ENCODE measurements at regions of chr21 and their contacts with region 1.

Region 1: DNA sequence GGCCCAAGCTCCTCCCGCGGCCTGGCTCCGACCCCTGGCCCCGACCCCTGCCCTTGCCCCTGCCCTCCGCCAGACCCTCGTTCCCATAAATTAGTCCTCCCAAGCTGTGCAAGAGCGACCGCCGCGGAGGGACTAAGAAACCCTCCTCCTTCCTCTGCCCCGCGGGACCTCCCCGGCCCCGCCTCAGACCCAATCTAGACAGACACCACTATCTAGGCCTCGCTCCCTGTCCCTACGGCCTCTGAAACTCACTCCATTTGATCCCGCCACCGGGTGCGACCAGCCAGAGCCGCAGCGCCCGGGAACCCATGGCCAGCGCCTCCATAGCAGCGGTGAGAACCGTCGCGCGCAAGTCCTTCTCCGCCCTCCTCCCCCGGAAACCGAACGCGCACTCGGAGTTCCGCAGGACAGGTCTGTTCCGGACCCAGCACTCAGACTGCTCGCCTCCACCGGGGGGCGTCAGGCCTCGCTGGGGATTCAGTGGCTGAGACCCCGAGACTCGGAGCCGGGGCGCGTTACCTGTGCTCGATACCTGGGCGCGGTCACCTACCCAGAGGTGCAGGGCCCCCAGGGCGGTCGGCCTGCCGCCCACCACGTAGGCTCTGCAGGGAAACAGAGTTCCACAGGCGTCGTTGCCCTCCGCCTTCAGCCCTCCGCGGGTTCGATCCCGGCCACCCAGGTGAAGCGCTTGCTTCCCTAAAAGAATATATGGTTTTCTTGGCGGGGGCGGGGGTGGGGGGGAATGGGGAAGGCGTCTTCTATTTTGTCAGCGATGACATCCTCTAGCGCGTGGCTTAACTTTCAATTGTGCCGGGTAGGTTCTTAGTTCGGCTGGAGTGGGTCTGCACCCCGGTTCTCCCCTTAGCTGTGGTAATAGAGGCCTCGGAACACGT is at the start of gene MRPL39:
- DNase-seq: peak; percentile 92
- H3K4me3 ChIP-seq: peak within 1 kb of the TSS; percentile 62 to 80 (median 68)
- H3K27ac ChIP-seq: peak within 1 kb of the TSS; percentile 79 to 82 (median 82)
- H3K4me1 ChIP-seq: peaks cover 0 to 29% (median 21%) of the 10 kb centered on the region in 4 donors
- H3K27me3 ChIP-seq: no peaks in the 10 kb centered on the region
- CTCF ChIP-seq: peak in 3 of 4 experiments; percentile 23 to 38 (median 32)
- EP300 ChIP-seq: no peak
- POLR2A ChIP-seq: no peak
- total RNA-seq, gene MRPL39: 15.3 to 18.9 (median 17.5) TPM

Region 2: GRCh38 chr21:25561668-25562641 is 45.4 kb before region 1 on chr21:
- intact Hi-C with region 1: no loop called
- DNase-seq: peak; percentile 73
- H3K4me3 ChIP-seq: peak overlapping the region; percentile 30 to 55 (median 48)
- H3K27ac ChIP-seq: peak overlapping the region in 3 of 4 donors; percentile 32 to 58 (median 50)
- H3K4me1 ChIP-seq: peaks cover 0 to 10% (median 7%) of the 10 kb centered on the region in 4 donors
- H3K27me3 ChIP-seq: no peaks in the 10 kb centered on the region
- CTCF ChIP-seq: no peak
- EP300 ChIP-seq: no peak
- POLR2A ChIP-seq: no peak

Region 3: GRCh38 chr21:25639551-25640201 is 32.3 kb after region 1 on chr21:
- intact Hi-C with region 1: loop called (anchors 2 kb)
- DNase-seq: peak; percentile 76
- H3K4me3 ChIP-seq: peak overlapping the region; percentile 59 to 78 (median 66)
- H3K27ac ChIP-seq: peak overlapping the region; percentile 77 to 89 (median 84)
- H3K4me1 ChIP-seq: peaks cover 0 to 28% (median 21%) of the 10 kb centered on the region in 4 donors
- H3K27me3 ChIP-seq: peaks cover 0 to 11% (median 3%) of the 10 kb centered on the region in 3 donors
- CTCF ChIP-seq: peak in 1 of 4 experiments; percentile 34
- EP300 ChIP-seq: no peak
- POLR2A ChIP-seq: no peak

Region 4: GRCh38 chr21:25708467-25709065 is 101.2 kb after region 1 on chr21:
- intact Hi-C with region 1: loop called (anchors 1 kb)
- DNase-seq: no peak
- H3K4me3 ChIP-seq: no peak overlapping the region
- H3K27ac ChIP-seq: no peak overlapping the region
- H3K4me1 ChIP-seq: no peaks in the 10 kb centered on the region
- H3K27me3 ChIP-seq: no peaks in the 10 kb centered on the region
- CTCF ChIP-seq: peak; percentile 55 to 88 (median 65)
- EP300 ChIP-seq: no peak
- POLR2A ChIP-seq: no peak

Region 5: DNA sequence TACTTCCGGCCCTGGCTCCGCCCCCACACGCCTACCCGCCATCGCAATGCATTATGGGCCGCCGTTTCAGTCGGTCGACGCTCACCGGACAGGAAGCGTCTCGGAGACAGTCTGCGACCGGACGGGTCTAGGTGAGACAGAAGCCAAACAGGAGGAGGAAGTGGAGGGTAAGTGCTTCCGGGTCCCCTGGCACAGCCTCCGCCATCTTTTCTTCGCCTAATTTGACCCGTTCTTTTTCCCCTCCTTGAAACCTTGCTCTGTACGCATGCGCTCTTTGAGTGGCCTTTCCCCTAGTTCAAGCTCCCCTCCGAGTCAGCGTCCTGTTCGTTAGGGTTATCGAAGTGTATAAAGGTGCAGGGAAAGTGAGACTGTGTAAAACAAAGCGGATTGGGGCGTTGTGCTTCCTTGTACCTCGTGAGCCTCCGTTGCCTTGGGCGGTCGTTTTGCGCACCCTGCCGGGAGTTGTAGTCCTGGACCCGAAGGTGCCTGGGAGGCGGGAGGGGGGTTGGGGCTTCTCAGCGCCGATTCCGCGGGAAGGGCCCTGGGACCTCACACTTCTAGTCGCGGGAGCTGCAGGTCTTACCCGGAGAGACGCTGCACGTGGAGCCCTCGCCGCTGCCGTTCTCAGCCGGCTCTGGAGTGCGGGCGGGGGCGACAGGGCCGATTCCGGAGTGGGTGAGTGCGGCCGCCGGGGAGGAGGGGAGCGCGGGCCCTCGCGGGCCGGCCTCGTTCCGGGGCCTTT is 127.7 kb after region 1 on chr21 and contains the starts of genes ATP5PF and GABPA:
- intact Hi-C with region 1: loop called (anchors 10 kb)
- DNase-seq: peak; percentile 99
- H3K4me3 ChIP-seq: peak within 1 kb of the TSS; percentile 81 to 98 (median 85)
- H3K27ac ChIP-seq: peak within 1 kb of the TSS; percentile 94 to 99 (median 98)
- H3K4me1 ChIP-seq: peaks cover 0 to 55% (median 43%) of the 10 kb centered on the region in 4 donors
- H3K27me3 ChIP-seq: no peaks in the 10 kb centered on the region
- CTCF ChIP-seq: no peak
- EP300 ChIP-seq: peak in 1 of 4 donors; percentile 47
- POLR2A ChIP-seq: no peak
- total RNA-seq, gene ATP5PF: 232 to 283 (median 239) TPM
- total RNA-seq, gene GABPA: 17.6 to 32.5 (median 27.2) TPM

Region 6: GRCh38 chr21:25862596-25862995 is 255.2 kb after region 1 on chr21:
- intact Hi-C with region 1: loop called (anchors 5 kb)
- DNase-seq: no peak
- H3K4me3 ChIP-seq: no peak overlapping the region
- H3K27ac ChIP-seq: no peak overlapping the region
- H3K4me1 ChIP-seq: peaks cover 0 to 13% (median 4%) of the 10 kb centered on the region in 4 donors
- H3K27me3 ChIP-seq: no peaks in the 10 kb centered on the region
- CTCF ChIP-seq: peak in 3 of 4 experiments; percentile 34 to 68 (median 46)
- EP300 ChIP-seq: no peak
- POLR2A ChIP-seq: no peak

Region 7: DNA sequence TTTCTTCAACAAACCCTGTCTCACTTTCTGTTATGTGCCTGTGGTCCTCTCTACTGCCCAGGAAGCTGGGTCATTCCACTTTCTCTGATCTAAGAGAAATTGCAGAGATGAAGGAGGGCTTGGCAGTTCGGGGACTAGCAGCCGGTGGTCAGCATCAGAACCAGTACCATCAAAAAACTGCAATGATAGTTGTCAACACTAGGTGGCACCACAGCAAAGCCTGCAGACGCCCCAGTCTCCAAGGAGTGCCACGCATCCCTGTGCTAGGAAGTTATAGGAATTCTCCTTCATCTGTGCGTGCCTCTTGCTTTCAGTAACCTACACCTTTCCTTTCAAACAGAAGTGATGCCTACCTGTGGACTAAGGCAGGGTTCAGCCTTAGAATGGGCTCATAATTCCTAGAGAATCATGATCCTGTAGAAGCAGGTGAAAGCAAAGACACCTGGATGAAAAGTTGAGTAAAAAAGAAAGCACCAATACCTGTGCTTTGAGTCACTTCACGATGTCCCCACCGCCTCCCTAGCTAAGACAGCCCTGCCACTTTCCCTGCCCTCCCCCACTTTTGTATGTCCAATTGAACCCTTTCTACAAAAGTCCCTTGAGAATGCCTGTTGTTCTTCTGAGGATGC is 1108.6 kb after region 1 on chr21:
- intact Hi-C with region 1: loop called (anchors 10 kb)
- DNase-seq: no peak
- H3K4me3 ChIP-seq: no peak overlapping the region
- H3K27ac ChIP-seq: no peak overlapping the region
- H3K4me1 ChIP-seq: no peaks in the 10 kb centered on the region
- H3K27me3 ChIP-seq: no peaks in the 10 kb centered on the region
- CTCF ChIP-seq: peak in 3 of 4 experiments; percentile 32 to 70 (median 52)
- EP300 ChIP-seq: no peak
- POLR2A ChIP-seq: no peak